Dendritic cell treated with granulocyte-macrophage colony-stimulating factor and Interleukin-4, amounts not matched to agents 40 ng/mL and 50 ng/mL, for 4 days (primary cell): ENCODE measurements at regions of chr7 and their contacts with region 1.

Region 1: DNA sequence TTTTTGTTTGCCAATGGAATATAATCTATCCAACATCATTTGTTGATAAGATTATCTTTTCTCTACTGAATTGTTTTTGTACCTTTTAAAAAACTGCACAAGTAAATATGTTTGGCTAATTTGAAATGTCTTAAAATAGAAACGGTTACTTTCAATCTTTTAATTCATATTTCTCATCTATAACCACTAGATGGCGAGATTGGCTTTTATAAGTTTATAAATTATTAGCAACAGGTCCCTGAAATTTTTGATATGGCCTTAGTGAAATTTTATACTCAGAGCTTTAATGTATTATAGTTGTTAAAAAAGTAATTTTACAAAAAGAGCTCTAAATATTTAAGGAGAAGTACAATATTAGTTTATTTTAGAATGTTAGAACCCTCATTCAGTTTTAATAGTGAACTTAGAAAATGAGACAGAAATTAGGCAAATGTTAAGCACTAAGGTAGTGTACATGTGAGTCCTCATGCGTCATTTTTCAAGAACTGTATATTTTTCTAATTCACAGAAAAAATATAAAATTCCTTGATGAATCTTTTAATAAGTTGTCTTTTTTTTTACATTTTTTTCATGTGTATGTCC is 592.5 kb downstream of the ARL4A start:
- H3K4me3 Mint-ChIP-seq: no peak overlapping the region
- H3K27ac Mint-ChIP-seq: no peak overlapping the region
- H3K4me1 Mint-ChIP-seq: no peaks in the 10 kb centered on the region
- H3K27me3 Mint-ChIP-seq: peaks cover 2% of the 10 kb centered on the region

Region 2: DNA sequence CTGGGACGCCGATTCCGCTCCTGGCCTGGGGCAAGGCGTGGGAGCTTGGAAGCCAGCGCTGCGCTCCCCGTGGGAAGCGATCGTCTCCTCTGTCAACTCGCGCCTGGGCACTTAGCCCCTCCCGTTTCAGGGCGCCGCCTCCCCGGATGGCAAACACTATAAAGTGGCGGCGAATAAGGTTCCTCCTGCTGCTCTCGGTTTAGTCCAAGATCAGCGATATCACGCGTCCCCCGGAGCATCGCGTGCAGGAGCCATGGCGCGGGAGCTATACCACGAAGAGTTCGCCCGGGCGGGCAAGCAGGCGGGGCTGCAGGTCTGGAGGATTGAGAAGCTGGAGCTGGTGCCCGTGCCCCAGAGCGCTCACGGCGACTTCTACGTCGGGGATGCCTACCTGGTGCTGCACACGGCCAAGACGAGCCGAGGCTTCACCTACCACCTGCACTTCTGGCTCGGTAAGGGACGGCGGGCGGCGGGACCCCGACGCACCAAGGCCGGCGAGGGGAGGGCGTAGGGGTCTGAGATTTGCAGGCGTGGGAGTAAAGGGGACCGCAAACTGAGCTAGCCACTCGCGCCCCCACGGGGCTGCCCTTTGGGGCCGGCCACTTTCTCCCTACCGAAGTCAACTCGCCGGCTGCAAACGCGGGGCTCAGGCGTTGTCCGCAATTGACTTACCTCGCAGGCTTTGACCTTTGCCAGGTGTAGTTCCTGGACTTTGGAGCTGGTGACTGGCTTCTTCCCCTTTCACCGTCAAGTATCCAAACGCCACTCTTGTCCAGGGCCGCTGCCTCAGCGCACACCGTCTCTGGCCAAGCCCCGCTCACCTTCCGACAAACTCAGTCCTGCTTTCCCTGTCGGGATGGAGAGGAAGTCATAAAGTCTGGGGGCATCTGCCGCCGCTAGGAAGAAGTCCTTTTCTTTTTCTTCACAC is 709.1 kb before region 1 on chr7 and contains the start of gene SCIN:
- intact Hi-C with region 1: no loop called
- H3K4me3 Mint-ChIP-seq: peak within 1 kb of the TSS; percentile 73
- H3K27ac Mint-ChIP-seq: no peak within 1 kb of the TSS
- H3K4me1 Mint-ChIP-seq: peaks cover 28% of the 10 kb centered on the region
- H3K27me3 Mint-ChIP-seq: peaks cover 31% of the 10 kb centered on the region

Region 3: GRCh38 chr7:13307040-13307439 is 27.1 kb after region 1 on chr7:
- intact Hi-C with region 1: no loop called
- H3K4me3 Mint-ChIP-seq: no peak overlapping the region
- H3K27ac Mint-ChIP-seq: no peak overlapping the region
- H3K4me1 Mint-ChIP-seq: no peaks in the 10 kb centered on the region
- H3K27me3 Mint-ChIP-seq: no peaks in the 10 kb centered on the region

Region 4: DNA sequence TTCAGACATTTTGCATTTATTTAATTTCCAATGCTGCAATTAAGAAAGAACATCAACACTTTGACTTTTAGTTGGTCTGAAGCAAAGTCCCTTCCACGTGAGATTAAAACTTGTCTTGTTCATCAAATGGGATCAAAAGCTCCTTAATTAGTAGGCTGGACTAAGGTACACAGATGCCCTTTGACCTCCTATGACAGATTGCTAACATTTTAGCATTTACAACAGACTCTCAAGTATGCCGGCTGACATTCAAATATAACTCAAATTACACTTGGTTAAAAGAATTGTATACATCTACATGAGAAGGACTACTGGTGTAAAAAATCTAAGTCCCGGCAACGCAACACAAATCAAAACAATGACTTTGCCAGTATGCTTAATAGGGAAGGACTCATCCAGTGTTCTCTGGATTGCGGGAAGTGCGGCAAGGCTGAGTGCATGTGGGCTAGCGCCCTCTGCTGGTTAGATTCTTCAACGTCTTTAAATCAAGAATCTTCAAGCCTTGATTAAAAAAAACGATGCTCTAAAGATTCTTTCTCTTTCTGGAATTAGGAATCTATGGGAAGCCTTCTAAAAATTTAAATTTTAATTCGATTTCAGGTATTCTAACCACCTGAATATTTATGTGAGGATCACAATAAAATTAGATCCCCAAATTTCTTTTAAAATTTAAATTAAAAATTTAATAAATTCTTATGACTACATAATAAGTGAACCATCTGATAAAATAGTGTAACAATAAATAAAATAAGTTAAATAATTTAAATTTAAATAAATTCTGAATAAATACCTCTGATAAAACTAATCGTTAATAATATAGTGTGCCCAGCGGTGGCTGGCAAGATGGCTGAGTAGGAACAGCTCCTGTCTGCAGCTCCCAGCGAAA is 1177.9 kb after region 1 on chr7:
- intact Hi-C with region 1: loop called (anchors 1 kb)
- H3K4me3 Mint-ChIP-seq: no peak overlapping the region
- H3K27ac Mint-ChIP-seq: no peak overlapping the region
- H3K4me1 Mint-ChIP-seq: no peaks in the 10 kb centered on the region
- H3K27me3 Mint-ChIP-seq: no peaks in the 10 kb centered on the region

Region 5: DNA sequence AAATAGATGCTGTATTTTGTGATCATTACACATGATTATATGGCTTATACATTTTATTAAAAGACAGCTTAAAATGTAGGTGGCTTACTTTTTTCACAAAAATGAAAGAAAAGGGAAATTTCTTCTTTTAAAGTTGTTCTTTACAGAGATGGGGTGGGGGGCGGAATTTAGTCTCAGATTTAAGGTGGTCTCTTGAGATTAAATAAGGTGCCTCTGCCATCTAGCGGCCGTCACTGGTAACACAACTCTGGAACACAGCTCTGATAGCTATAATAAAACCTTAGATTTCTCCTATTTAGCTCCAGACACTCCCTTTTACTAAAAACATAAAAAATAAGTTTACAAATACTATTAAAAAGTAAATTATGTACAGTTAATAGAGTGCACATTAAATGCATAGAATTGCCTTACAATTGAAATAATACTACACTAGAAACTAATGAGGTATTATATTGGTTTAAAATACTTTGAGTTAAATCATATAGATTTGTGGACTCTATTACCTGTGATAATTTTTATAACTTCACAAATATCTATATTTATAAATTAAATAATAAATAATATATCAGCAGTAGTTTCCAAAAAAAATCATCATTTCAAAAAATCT is 1411.8 kb after region 1 on chr7:
- intact Hi-C with region 1: loop called (anchors 1 kb)
- H3K4me3 Mint-ChIP-seq: no peak overlapping the region
- H3K27ac Mint-ChIP-seq: no peak overlapping the region
- H3K4me1 Mint-ChIP-seq: peaks cover 8% of the 10 kb centered on the region
- H3K27me3 Mint-ChIP-seq: no peaks in the 10 kb centered on the region

Region 6: GRCh38 chr7:15015545-15016326 is 1735.8 kb after region 1 on chr7:
- intact Hi-C with region 1: loop called (anchors 2 kb)
- H3K4me3 Mint-ChIP-seq: no peak overlapping the region
- H3K27ac Mint-ChIP-seq: no peak overlapping the region
- H3K4me1 Mint-ChIP-seq: no peaks in the 10 kb centered on the region
- H3K27me3 Mint-ChIP-seq: no peaks in the 10 kb centered on the region